Caco-2 (cell line): ENCODE measurements at regions of chrX and their contacts with region 1.

Region 1: GRCh38 chrX:107576841-107577240 is 51.5 kb upstream of the PRPS1 start:
- DNase-seq: no peak
- H3K4me3 ChIP-seq: no peak overlapping the region
- H3K4me3 Mint-ChIP-seq: no peak overlapping the region
- H3K27ac Mint-ChIP-seq: no peak overlapping the region
- H3K4me1 ChIP-seq: no peaks in the 10 kb centered on the region
- H3K4me1 Mint-ChIP-seq: no peaks in the 10 kb centered on the region
- H3K27me3 ChIP-seq: no peaks in the 10 kb centered on the region
- H3K27me3 Mint-ChIP-seq: no peaks in the 10 kb centered on the region
- CTCF ChIP-seq: no peak

Region 2: DNA sequence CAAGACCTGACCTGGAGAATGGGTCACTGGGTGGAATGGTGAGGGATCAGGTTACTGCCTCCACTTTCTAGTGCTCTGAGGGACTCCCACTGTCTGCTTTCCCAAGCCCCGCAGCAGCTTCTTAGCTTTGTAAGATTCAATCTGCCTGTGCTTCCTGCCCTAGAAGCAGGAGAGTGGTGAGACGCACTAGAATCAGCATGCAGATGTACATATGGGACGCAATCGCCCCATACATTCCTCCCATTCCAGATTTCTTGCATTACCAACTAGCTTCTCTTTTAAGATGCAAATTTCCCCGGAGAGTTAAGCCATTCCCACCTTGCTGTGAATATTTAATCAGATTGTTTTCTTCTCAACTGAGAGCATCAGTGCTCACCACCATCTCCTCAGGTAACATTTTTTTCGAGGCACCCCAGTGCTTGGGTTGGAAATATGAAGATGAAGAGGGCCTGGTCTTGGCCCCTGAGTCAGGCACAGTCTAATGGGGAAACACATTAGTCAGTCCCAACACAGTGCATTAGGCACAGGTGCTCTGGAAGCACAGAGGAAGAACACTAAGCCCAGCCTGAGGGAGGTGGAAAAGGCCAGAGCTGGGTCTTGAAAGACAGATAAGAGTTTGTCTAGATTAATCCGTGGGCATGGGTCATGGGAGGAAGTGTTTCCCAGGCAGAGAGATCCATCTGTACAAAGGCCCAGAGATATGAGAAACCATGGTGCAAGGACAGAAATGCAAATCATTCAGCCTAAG is 15.2 kb before region 1 on chrX:
- CTCF ChIA-PET with region 1: no interaction called
- POLR2A ChIA-PET with region 1: interaction called, 10 read pairs
- intact Hi-C with region 1: no loop called
- DNase-seq: no peak
- H3K4me3 ChIP-seq: no peak overlapping the region
- H3K4me3 Mint-ChIP-seq: no peak overlapping the region
- H3K27ac Mint-ChIP-seq: no peak overlapping the region
- H3K4me1 ChIP-seq: no peaks in the 10 kb centered on the region
- H3K4me1 Mint-ChIP-seq: peaks cover 7% of the 10 kb centered on the region
- H3K27me3 ChIP-seq: no peaks in the 10 kb centered on the region; the same call in 1 of the 2 replicates
- H3K27me3 Mint-ChIP-seq: no peaks in the 10 kb centered on the region
- CTCF ChIP-seq: no peak

Region 3: DNA sequence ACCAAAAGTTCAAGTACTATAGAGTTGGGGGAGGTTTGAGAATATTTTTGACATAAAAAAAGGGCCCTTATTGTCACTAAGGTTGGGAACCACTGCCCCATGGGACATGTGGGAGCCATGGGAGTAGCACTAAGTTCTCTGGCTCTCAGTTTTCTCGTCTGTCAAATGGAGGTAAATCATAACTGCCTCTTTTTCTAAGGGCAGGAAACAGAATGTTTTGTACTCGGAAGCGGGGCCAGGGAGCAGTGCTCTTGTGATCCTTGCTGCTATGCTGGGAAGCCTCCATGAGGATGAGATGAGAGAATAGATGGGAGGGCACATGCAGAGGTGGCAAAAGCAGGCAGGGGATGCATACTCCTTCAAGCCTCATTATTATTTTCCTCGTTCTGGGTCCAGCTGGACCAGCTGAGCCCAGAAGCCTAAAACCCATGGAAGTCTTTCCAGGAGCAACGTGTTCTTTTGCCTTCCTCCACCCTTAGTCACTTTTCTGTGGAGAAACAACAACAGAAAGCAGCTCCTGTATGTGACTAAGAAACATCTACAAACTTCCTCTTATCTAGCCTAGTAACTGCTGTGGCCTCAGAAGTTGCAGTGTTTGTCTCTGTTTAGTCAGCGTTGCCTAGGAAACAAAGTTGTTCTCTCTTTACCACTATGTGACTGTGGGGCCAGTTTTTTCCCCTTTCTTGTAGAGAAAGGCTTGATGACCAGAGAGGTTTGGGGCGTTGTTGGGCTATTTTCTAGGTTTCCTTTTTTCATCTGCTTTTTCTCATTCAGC is 134.0 kb after region 1 on chrX:
- CTCF ChIA-PET with region 1: no interaction called
- POLR2A ChIA-PET with region 1: no interaction called
- intact Hi-C with region 1: no loop called
- DNase-seq: peak; percentile 40 to 58
- H3K4me3 ChIP-seq: no peak overlapping the region
- H3K4me3 Mint-ChIP-seq: peak overlapping the region; percentile 38
- H3K27ac Mint-ChIP-seq: peak overlapping the region; percentile 84
- H3K4me1 ChIP-seq: no peaks in the 10 kb centered on the region
- H3K4me1 Mint-ChIP-seq: peaks cover 10% of the 10 kb centered on the region
- H3K27me3 ChIP-seq: no peaks in the 10 kb centered on the region
- H3K27me3 Mint-ChIP-seq: no peaks in the 10 kb centered on the region
- CTCF ChIP-seq: no peak